Thyroid gland (tissue), 4 donors: ENCODE measurements at regions of chr11 and their contacts with region 1.

Region 1: GRCh38 chr11:16261836-16262644 is 94.3 kb downstream of the SOX6 start:
- DNase-seq: no peak
- H3K4me3 ChIP-seq: no peak overlapping the region
- H3K27ac ChIP-seq: no peak overlapping the region
- H3K4me1 ChIP-seq: no peaks in the 10 kb centered on the region
- H3K27me3 ChIP-seq: no peaks in the 10 kb centered on the region
- CTCF ChIP-seq: no peak
- POLR2A ChIP-seq: no peak

Region 2: GRCh38 chr11:16338393-16338792 is 76.4 kb after region 1 on chr11:
- intact Hi-C with region 1: loop called (anchors 10 kb)
- DNase-seq: no peak
- H3K4me3 ChIP-seq: no peak overlapping the region
- H3K27ac ChIP-seq: no peak overlapping the region
- H3K4me1 ChIP-seq: no peaks in the 10 kb centered on the region
- H3K27me3 ChIP-seq: no peaks in the 10 kb centered on the region
- CTCF ChIP-seq: no peak
- POLR2A ChIP-seq: no peak